ENCODE measurements at regions of chr9 and their contacts with region 1.

Region 1: DNA sequence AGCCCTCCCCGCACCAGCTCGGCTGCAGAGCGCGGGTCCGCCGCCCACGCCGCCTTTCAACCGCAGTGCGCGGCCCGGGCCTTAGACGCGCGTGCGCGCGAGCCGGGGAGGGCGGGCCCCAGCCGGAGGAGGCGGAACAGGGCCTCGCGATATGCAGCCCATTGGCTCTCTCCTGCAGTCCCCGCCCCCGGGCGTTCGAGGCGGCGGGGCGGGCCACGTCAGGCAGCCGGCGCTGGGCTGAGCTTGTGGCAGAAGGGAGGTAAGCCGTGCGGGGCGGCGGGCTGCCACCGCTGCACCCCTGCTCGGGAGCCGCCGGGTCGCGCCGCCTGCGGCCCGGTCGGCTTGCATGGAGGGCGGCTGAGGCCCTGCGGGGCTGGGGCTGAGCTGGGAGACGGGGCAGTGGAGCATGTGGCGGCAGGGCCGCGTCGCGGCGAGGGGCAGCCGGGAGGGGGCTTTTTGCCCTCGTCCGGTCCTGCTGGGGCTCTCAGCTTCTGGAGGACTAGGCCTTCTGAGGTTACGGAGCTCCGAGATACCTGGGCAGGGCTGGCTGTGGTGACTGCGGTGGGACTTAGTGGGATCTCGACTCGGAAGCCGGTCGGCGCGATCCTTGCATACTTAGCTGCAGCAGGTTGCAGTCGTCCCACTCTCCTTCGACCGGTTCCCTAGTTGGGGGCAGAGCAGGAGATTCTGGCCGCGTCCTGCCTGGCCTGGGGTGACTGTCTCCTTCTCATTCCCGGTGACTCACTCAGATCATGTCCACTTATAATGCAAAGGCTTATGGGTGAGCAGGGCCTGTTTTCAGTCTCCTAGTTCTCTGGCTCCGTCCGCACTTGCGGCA is at the start of gene FOCAD:
- DNase-seq: peak; percentile 89
- ATAC-seq: peak; percentile 99
- H3K4me3 ChIP-seq: peak within 1 kb of the TSS; percentile 65 to 89 (median 88)
- H3K27ac ChIP-seq: peak within 1 kb of the TSS; percentile 91
- H3K4me1 ChIP-seq: peaks cover 54% of the 10 kb centered on the region
- H3K27me3 ChIP-seq: no peaks in the 10 kb centered on the region; a peak in 1 of 5 replicates
- CTCF ChIP-seq: no peak
- EP300 ChIP-seq: 0 out of 4 replicates have a peak, but pooled peaks of 1 of the 2 experiments have one; percentile 46
- POLR2A ChIP-seq: peak; percentile 94 to 98
- RAD21 ChIP-seq: peak; percentile 50; the same call in 1 of the 2 replicates
- total RNA-seq, gene FOCAD: 31.1 and 52.7 TPM in 2 replicates

Region 2: DNA sequence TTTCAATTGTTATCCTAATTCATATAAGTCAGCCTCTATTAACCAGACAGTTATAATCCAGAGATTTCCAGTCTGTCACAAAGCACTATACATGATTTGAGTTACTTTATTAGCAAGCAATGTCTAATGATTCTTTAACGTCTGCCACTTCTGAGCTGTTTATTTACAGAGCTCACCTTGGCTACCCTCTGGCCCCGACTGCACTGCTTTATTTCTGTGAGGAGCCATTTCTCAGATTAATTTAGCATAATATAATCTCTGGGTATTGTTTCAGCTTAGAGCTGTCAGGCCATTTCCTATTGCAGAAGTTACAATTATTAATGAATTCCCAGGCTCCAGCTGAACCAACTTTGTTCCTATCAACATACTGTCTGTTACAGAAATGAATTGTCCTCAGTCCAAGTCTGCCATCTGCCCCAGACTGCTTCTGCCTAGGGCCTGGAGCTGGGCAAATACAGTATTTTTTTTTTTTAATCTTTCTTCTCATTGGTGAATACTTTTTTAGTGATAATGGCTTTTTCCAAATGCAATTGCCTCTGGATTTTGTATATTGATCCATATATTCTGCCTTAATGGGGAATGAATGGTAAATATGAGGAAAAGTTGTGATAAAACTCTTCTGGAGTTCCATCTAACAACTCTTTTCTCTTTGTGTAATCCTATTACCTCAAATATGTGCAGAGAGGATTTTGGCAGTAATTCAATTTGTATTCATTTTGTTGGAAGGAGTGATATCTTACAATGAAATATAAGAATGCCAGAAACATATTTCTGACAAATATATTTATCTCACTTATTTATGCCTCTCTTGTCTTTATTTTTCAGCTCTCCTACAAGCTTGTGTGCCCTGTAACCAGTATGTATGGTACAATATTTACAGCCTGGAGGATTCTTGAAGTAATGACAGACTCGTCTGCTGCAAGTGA is 104.5 kb after region 1 on chr9:
- CTCF ChIA-PET with region 1: no interaction called
- POLR2A ChIA-PET with region 1: no interaction called
- in situ Hi-C with region 1: no loop called
- intact Hi-C with region 1: loop called (anchors 10 kb)
- DNase-seq: no peak
- ATAC-seq: no peak
- H3K4me3 ChIP-seq: no peak overlapping the region
- H3K27ac ChIP-seq: no peak overlapping the region
- H3K4me1 ChIP-seq: no peaks in the 10 kb centered on the region
- H3K27me3 ChIP-seq: no peaks in the 10 kb centered on the region
- CTCF ChIP-seq: no peak
- EP300 ChIP-seq: no peak
- POLR2A ChIP-seq: no peak
- RAD21 ChIP-seq: no peak

Region 3: GRCh38 chr9:20835364-20836286 is 151.4 kb after region 1 on chr9:
- CTCF ChIA-PET with region 1: no interaction called
- POLR2A ChIA-PET with region 1: interaction called, 5 read pairs
- in situ Hi-C with region 1: no loop called
- intact Hi-C with region 1: loop called (anchors 5 kb)
- DNase-seq: peak; percentile 85
- ATAC-seq: peak; percentile 93
- H3K4me3 ChIP-seq: no peak overlapping the region
- H3K27ac ChIP-seq: peak overlapping the region; percentile 21
- H3K4me1 ChIP-seq: peaks cover 18% of the 10 kb centered on the region
- H3K27me3 ChIP-seq: no peaks in the 10 kb centered on the region
- CTCF ChIP-seq: no peak
- EP300 ChIP-seq: peak; percentile 40 to 84; a peak in 2 of 4 replicates
- POLR2A ChIP-seq: no peak
- RAD21 ChIP-seq: no peak

Region 4: DNA sequence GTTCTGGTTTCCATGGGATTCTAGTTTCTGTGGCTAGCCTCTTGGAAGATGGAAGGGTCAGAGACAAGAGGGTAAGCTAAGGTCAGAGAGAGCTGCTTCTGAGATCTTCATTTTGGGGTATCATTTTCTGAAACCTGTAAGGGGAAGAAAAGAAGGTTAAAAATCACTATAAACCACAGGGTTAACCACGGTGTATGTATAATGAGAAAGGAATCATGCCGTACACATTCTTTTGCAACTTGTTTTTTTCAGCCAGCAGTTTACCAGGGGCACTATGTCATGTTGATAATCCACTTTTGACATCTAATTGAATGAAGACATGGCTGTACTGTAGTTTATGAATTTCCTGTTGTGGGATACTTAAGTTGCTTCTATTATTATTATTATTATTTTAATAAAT is 164.2 kb after region 1 on chr9:
- CTCF ChIA-PET with region 1: no interaction called
- POLR2A ChIA-PET with region 1: no interaction called
- in situ Hi-C with region 1: no loop called
- intact Hi-C with region 1: no loop called
- DNase-seq: no peak
- ATAC-seq: no peak
- H3K4me3 ChIP-seq: no peak overlapping the region
- H3K27ac ChIP-seq: no peak overlapping the region
- H3K4me1 ChIP-seq: no peaks in the 10 kb centered on the region
- H3K27me3 ChIP-seq: no peaks in the 10 kb centered on the region
- CTCF ChIP-seq: no peak
- EP300 ChIP-seq: no peak
- POLR2A ChIP-seq: no peak
- RAD21 ChIP-seq: no peak

Region 5: DNA sequence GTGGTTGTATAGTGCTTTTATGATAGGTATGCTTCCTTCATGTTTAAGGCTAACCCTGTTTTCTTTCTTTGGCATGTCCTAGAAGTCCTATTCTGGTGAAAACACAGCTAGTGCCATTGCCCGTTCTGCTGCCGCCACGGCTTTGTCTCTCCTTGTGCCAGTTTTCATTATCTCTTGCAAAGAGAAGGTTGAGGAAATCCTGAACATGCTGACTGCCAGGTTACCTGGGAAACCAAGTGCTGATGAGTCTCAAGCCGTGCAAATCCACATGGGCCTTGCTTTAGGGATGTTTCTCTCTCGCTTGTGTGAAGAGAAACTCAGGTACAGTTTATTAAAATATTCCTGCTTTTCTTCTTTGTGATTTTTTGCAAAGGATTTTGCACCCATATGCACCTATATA is 245.0 kb after region 1 on chr9:
- CTCF ChIA-PET with region 1: no interaction called
- POLR2A ChIA-PET with region 1: no interaction called
- in situ Hi-C with region 1: no loop called
- intact Hi-C with region 1: loop called (anchors 10 kb)
- DNase-seq: no peak
- ATAC-seq: no peak
- H3K4me3 ChIP-seq: no peak overlapping the region
- H3K27ac ChIP-seq: no peak overlapping the region
- H3K4me1 ChIP-seq: no peaks in the 10 kb centered on the region
- H3K27me3 ChIP-seq: no peaks in the 10 kb centered on the region
- CTCF ChIP-seq: no peak
- EP300 ChIP-seq: no peak
- POLR2A ChIP-seq: no peak
- RAD21 ChIP-seq: no peak